Activated B cell treated with CpG ODN at 0.5 μM for 24 hours (primary cell): ENCODE measurements at regions of chr6 and their contacts with region 1.

Region 1: GRCh38 chr6:14383451-14383856 is 265.9 kb downstream of the CD83 start:
- DNase-seq: no peak
- ATAC-seq: no peak
- H3K4me3 Mint-ChIP-seq: no peak overlapping the region
- H3K27ac Mint-ChIP-seq: no peak overlapping the region
- H3K4me1 Mint-ChIP-seq: peaks cover 58% of the 10 kb centered on the region
- H3K27me3 Mint-ChIP-seq: no peaks in the 10 kb centered on the region
- CTCF ChIP-seq: no peak

Region 2: GRCh38 chr6:14371530-14371929 is 11.9 kb before region 1 on chr6:
- CTCF ChIA-PET with region 1: interaction called, 3 read pairs
- POLR2A ChIA-PET with region 1: interaction called, 3 read pairs
- intact Hi-C with region 1: loop called (anchors 2 kb)
- DNase-seq: no peak
- ATAC-seq: no peak
- H3K4me3 Mint-ChIP-seq: peak overlapping the region; percentile 53
- H3K27ac Mint-ChIP-seq: peak overlapping the region; percentile 66
- H3K4me1 Mint-ChIP-seq: peaks cover 62% of the 10 kb centered on the region
- H3K27me3 Mint-ChIP-seq: no peaks in the 10 kb centered on the region
- CTCF ChIP-seq: no peak

Region 3: GRCh38 chr6:15305496-15305895 is 922.0 kb after region 1 on chr6:
- CTCF ChIA-PET with region 1: no interaction called
- POLR2A ChIA-PET with region 1: interaction called, 12 read pairs
- intact Hi-C with region 1: no loop called
- DNase-seq: no peak
- ATAC-seq: peak; percentile 75
- H3K4me3 Mint-ChIP-seq: peak overlapping the region; percentile 62
- H3K27ac Mint-ChIP-seq: peak overlapping the region; percentile 91
- H3K4me1 Mint-ChIP-seq: peaks cover 82% of the 10 kb centered on the region
- H3K27me3 Mint-ChIP-seq: no peaks in the 10 kb centered on the region
- CTCF ChIP-seq: no peak